SK-N-SH (cell line): ENCODE measurements at regions of chr5 and their contacts with region 1.

Region 1: DNA sequence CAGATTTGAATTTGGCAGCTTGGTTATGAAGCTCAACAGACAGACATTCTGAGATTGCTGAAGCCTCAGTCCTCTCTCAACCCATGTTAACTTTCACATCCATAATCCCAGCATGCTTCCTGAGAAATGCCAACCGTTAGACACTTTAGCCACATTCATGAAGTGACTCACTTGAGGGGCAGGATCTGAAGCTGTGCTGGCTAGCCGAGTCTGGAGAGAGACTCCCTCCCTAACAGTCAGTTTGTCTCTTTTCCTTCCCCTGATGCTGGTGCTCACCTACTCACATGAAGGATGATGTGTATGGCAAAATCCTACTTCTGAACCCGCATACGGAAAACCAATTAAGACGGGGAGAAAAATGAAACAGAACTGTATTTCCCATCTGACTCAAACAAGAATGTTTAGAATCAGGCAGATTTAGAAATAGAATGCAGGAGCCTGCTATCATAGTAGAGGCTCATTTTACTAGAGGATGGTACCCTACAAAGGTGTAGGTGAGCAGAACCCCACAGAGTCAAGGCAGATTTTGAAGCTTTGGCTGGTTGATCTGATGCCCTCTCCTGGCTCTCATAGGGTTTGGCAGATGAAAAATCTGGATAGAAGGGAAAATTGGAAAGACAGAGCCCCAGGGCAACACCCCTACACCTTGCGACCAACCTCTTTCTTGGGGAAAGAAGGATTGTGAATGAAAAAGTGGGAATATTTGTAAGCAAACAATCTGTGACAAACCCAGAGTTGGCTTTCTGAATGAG is 150.9 kb upstream of the LHFPL2 start:
- DNase-seq: no peak
- H3K4me3 ChIP-seq: no peak overlapping the region
- H3K27ac ChIP-seq: peak overlapping the region; percentile 78 to 93
- H3K4me1 ChIP-seq: peaks cover 21 to 47% of the 10 kb centered on the region in 2 experiments; a peak in 3 of 4 replicates
- H3K27me3 ChIP-seq: no peaks in the 10 kb centered on the region
- CTCF ChIP-seq: peak; percentile 53
- EP300 ChIP-seq: peak in 1 of 2 experiments; percentile 50; a peak in 1 of 4 replicates
- RAD21 ChIP-seq: peak; percentile 40

Region 2: GRCh38 chr5:78473751-78474150 is 325.7 kb before region 1 on chr5:
- CTCF ChIA-PET with region 1: no interaction called
- POLR2A ChIA-PET with region 1: no interaction called
- DNase-seq: no peak
- H3K4me3 ChIP-seq: no peak overlapping the region
- H3K27ac ChIP-seq: peak overlapping the region in 1 of 2 experiments; percentile 31; a peak in 1 of 4 replicates
- H3K4me1 ChIP-seq: peaks cover 0 to 6% of the 10 kb centered on the region in 2 experiments; a peak in 3 of 4 replicates
- H3K27me3 ChIP-seq: no peaks in the 10 kb centered on the region
- CTCF ChIP-seq: no peak
- EP300 ChIP-seq: no peak
- RAD21 ChIP-seq: no peak

Region 3: GRCh38 chr5:78779771-78780616 is 19.4 kb before region 1 on chr5:
- CTCF ChIA-PET with region 1: no interaction called
- POLR2A ChIA-PET with region 1: no interaction called
- DNase-seq: no peak
- H3K4me3 ChIP-seq: no peak overlapping the region
- H3K27ac ChIP-seq: peak overlapping the region in 1 of 2 experiments; percentile 5; a peak in 1 of 4 replicates
- H3K4me1 ChIP-seq: peaks cover 2 to 3% of the 10 kb centered on the region in 2 experiments; a peak in 2 of 4 replicates
- H3K27me3 ChIP-seq: no peaks in the 10 kb centered on the region
- CTCF ChIP-seq: no peak
- EP300 ChIP-seq: no peak
- RAD21 ChIP-seq: no peak

Region 4: GRCh38 chr5:78809444-78809843 is 10.0 kb after region 1 on chr5:
- CTCF ChIA-PET with region 1: interaction called, 10 read pairs
- POLR2A ChIA-PET with region 1: interaction called, 5 read pairs
- DNase-seq: peak; percentile 70
- H3K4me3 ChIP-seq: no peak overlapping the region
- H3K27ac ChIP-seq: peak overlapping the region in 1 of 2 experiments; percentile 96; a peak in 2 of 4 replicates
- H3K4me1 ChIP-seq: peaks cover 23 to 69% of the 10 kb centered on the region in 2 experiments
- H3K27me3 ChIP-seq: no peaks in the 10 kb centered on the region
- CTCF ChIP-seq: no peak
- EP300 ChIP-seq: peak in 1 of 2 experiments; percentile 90; a peak in 2 of 4 replicates
- RAD21 ChIP-seq: peak; percentile 43